Adrenal gland (tissue), 19 donors: ENCODE measurements at regions of chr2 and their contacts with region 1.

Region 1: DNA sequence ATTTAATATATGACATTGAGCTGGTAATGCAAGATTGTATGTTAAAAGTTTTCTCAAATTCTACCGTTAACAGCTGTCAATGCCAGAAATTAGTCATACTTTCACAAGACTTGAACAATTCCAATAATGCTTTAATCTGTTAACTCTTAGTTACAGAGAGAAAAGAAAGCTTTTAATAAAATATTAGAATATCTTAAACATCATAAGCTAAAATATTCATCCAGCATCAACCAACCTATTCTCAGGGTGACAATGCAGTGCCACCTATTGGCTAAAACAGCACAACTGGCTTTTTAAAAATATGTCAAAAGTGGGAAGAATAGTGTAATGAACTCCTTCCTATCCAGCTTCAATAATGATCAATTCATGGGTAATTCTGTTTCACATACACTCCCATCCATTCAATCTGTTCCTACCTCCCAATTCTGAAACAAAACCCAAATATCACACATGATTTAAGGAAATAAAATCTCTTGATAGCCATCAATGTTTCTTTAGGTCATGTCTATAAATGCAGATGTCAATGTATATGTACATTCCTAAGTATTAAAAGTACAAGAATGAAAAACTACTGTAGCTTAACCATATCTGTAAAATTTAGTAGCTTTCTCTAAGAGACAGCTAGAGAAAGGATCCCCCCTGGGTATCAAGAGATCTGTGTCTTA is 79.8 kb upstream of the CCDC141 start:
- DNase-seq: peak in 2 of 7 donors; percentile 2 to 10
- H3K4me3 ChIP-seq: no peak overlapping the region
- H3K27ac ChIP-seq: no peak overlapping the region
- H3K4me1 ChIP-seq: no peaks in the 10 kb centered on the region
- H3K27me3 ChIP-seq: no peaks in the 10 kb centered on the region
- CTCF ChIP-seq: peak; percentile 29 to 65 (median 48)
- POLR2A ChIP-seq: no peak

Region 2: DNA sequence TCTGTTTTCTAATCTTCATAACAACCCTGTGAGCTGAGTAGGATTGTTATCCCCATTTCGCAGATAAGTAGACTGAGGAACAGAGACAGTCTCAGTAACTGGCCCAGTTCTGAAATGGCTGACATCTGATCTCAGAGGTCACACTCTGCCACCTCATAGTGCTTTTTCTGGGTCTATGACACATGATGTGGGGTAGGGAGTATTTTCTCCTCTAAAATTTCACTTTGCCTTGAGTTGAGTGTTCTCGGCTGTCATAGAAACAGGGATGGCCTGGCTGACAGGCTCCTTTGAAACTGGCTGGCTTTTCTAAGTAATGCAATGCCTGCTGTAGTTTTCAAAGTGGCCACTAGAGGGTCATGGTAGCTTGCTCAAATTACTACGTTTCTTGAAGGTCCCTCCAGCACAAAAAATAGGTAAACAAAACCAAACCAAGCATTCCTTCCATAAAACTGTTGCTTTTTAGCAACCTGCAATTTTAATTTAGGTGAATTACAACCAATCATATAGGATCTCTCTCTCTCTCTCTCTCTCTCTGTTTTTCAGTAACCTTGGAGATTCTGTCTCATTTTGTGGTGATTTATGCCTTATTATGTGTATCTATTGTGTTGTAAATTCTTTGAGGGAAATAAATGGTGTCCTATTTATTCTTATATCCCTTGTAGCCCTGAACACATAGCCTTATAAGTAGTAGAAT is 238.3 kb before region 1 on chr2:
- intact Hi-C with region 1: loop called in 1 of 2 experiments (anchors 10 kb)
- DNase-seq: peak; percentile 42 to 88 (median 68)
- H3K4me3 ChIP-seq: no peak overlapping the region
- H3K27ac ChIP-seq: no peak overlapping the region
- H3K4me1 ChIP-seq: no peaks in the 10 kb centered on the region
- H3K27me3 ChIP-seq: no peaks in the 10 kb centered on the region
- CTCF ChIP-seq: peak; percentile 85 to 98 (median 90)
- POLR2A ChIP-seq: no peak